SK-N-SH (cell line): ENCODE measurements at regions of chr2 and their contacts with region 1.

Region 1: GRCh38 chr2:134460583-134460998 is 206.7 kb downstream of the MGAT5 start:
- DNase-seq: peak; percentile 76
- H3K4me3 ChIP-seq: peak overlapping the region in 1 of 2 experiments; percentile 27; a peak in 1 of 4 replicates
- H3K27ac ChIP-seq: no peak overlapping the region; a peak in 1 of 4 replicates
- H3K4me1 ChIP-seq: peaks cover 0 to 14% of the 10 kb centered on the region in 2 experiments; a peak in 1 of 4 replicates
- H3K27me3 ChIP-seq: no peaks in the 10 kb centered on the region
- CTCF ChIP-seq: peak; percentile 55
- EP300 ChIP-seq: no peak
- RAD21 ChIP-seq: peak; percentile 88

Region 2: GRCh38 chr2:134027980-134028379 is 432.6 kb before region 1 on chr2:
- CTCF ChIA-PET with region 1: no interaction called
- POLR2A ChIA-PET with region 1: no interaction called
- DNase-seq: no peak
- H3K4me3 ChIP-seq: no peak overlapping the region
- H3K27ac ChIP-seq: no peak overlapping the region
- H3K4me1 ChIP-seq: peaks cover 0 to 10% of the 10 kb centered on the region in 2 experiments; a peak in 1 of 4 replicates
- H3K27me3 ChIP-seq: no peaks in the 10 kb centered on the region
- CTCF ChIP-seq: no peak
- EP300 ChIP-seq: no peak
- RAD21 ChIP-seq: no peak

Region 3: GRCh38 chr2:134301099-134301927 is 159.3 kb before region 1 on chr2:
- CTCF ChIA-PET with region 1: no interaction called
- POLR2A ChIA-PET with region 1: no interaction called
- DNase-seq: no peak
- H3K4me3 ChIP-seq: no peak overlapping the region; a peak in 1 of 4 replicates
- H3K27ac ChIP-seq: peak overlapping the region; percentile 50 to 96
- H3K4me1 ChIP-seq: peaks cover 9 to 26% of the 10 kb centered on the region in 2 experiments; a peak in 3 of 4 replicates
- H3K27me3 ChIP-seq: no peaks in the 10 kb centered on the region
- CTCF ChIP-seq: no peak
- EP300 ChIP-seq: no peak; a peak in 1 of 4 replicates
- RAD21 ChIP-seq: no peak

Region 4: DNA sequence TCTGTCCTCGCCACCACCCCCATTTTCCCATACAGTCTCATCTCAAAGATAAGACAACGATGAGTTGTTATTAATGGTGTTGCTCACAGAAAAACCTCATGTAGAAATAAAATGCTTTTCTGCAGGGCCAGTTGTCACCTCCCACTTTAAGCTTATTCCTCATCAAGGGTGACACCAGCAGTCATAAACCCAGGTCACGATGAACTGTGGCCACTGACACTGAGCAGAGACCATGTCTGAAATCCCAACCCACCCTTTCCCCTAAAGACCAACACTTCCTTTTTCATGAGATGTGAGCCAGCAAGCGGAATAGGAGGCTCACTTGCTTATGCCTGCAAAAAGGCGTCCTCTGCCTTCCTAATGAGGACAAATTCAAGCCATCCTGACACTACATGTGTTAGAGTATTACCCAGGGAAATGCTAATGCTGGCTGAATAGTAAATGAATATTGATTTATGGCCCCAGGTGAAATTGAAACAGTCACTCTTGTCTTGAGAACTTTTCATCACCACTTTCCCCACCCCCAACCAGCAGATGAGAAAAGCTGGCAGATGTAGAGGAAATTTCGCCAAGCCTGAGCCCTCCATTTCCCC is 21.6 kb after region 1 on chr2:
- CTCF ChIA-PET with region 1: interaction called, 10 read pairs
- POLR2A ChIA-PET with region 1: no interaction called
- DNase-seq: no peak
- H3K4me3 ChIP-seq: no peak overlapping the region
- H3K27ac ChIP-seq: no peak overlapping the region
- H3K4me1 ChIP-seq: peaks cover 0 to 3% of the 10 kb centered on the region in 2 experiments; a peak in 1 of 4 replicates
- H3K27me3 ChIP-seq: no peaks in the 10 kb centered on the region
- CTCF ChIP-seq: no peak
- EP300 ChIP-seq: no peak
- RAD21 ChIP-seq: no peak

Region 5: DNA sequence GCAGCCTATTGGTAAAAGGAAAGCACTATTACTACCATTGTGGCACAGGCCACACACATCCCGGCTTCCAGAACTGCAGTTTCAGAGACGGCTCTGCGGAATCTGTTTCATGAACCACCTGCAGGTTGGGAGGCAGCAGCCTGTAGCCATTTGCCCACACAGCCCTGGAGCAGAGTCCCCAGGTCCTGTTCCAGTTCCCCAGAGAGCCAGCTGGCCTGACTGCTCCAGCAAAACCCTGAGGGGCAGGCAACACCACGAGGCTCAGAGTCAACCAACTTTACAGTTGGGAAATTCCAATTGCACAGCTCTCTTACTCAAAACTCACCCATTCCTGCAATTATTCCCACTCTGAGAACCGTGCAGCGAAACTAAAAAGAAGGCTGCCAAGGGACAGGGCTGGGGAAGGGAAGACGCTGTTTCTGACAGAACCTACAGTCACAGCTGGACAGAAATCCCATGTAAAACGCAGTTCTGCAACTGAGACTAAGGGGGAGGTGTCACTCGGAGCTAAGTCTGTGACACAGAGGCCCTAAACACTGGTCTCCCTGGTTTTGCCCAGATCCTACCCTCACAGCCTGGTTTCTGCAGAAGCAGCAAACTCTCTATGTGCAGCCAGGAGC is 38.8 kb after region 1 on chr2:
- CTCF ChIA-PET with region 1: interaction called, 16 read pairs
- POLR2A ChIA-PET with region 1: no interaction called
- DNase-seq: peak; percentile 21
- H3K4me3 ChIP-seq: no peak overlapping the region
- H3K27ac ChIP-seq: peak overlapping the region in 1 of 2 experiments; percentile 6; a peak in 1 of 4 replicates
- H3K4me1 ChIP-seq: peaks cover 0 to 14% of the 10 kb centered on the region in 2 experiments; a peak in 1 of 4 replicates
- H3K27me3 ChIP-seq: no peaks in the 10 kb centered on the region; the same call in 1 of the 2 replicates
- CTCF ChIP-seq: no peak
- EP300 ChIP-seq: no peak
- RAD21 ChIP-seq: no peak

Region 6: GRCh38 chr2:134782792-134783191 is 322.2 kb after region 1 on chr2:
- CTCF ChIA-PET with region 1: interaction called, 11 read pairs
- POLR2A ChIA-PET with region 1: no interaction called
- DNase-seq: peak; percentile 55
- H3K4me3 ChIP-seq: no peak overlapping the region
- H3K27ac ChIP-seq: no peak overlapping the region
- H3K4me1 ChIP-seq: no peaks in the 10 kb centered on the region
- H3K27me3 ChIP-seq: no peaks in the 10 kb centered on the region
- CTCF ChIP-seq: peak; percentile 52
- EP300 ChIP-seq: no peak
- RAD21 ChIP-seq: peak; percentile 60

Region 7: DNA sequence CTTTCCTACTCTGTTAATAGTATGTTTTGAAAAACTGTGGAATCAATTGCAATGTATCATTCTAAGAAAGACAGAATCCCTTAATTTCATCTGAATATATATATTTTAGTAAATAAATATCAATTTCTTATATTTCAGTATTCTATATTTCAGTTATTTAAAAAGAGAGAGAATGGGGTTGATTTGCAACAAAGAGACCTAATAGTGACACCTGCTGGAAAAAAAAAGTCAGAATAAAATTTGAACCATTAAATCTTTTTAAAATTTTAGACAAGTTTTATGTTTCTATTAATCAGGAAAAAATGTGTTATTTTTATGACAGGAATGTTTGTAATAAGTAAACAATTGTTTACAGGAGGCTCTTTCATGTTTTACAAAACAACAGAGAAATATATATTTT is 437.3 kb after region 1 on chr2:
- CTCF ChIA-PET with region 1: interaction called, 22 read pairs
- POLR2A ChIA-PET with region 1: no interaction called
- DNase-seq: peak; percentile 9
- H3K4me3 ChIP-seq: no peak overlapping the region
- H3K27ac ChIP-seq: no peak overlapping the region
- H3K4me1 ChIP-seq: no peaks in the 10 kb centered on the region; a peak in 1 of 4 replicates
- H3K27me3 ChIP-seq: no peaks in the 10 kb centered on the region
- CTCF ChIP-seq: peak; percentile 59
- EP300 ChIP-seq: no peak
- RAD21 ChIP-seq: peak; percentile 64